Activated naive CD8-positive, alpha-beta T cell treated with anti-CD3 and anti-CD28 coated beads, Interleukin-2, amount 10 ng/mL, durations not matched to agents 7 days and 5 days (primary cell): ENCODE measurements at regions of chr15 and their contacts with region 1.

Region 1: GRCh38 chr15:74420197-74420898 is 13.4 kb downstream of the SEMA7A start:
- DNase-seq: no peak
- ATAC-seq: peak; percentile 38
- H3K4me3 Mint-ChIP-seq: no peak overlapping the region
- H3K27ac Mint-ChIP-seq: peak overlapping the region; percentile 79
- H3K4me1 Mint-ChIP-seq: peaks cover 32% of the 10 kb centered on the region
- H3K27me3 Mint-ChIP-seq: no peaks in the 10 kb centered on the region

Region 2: DNA sequence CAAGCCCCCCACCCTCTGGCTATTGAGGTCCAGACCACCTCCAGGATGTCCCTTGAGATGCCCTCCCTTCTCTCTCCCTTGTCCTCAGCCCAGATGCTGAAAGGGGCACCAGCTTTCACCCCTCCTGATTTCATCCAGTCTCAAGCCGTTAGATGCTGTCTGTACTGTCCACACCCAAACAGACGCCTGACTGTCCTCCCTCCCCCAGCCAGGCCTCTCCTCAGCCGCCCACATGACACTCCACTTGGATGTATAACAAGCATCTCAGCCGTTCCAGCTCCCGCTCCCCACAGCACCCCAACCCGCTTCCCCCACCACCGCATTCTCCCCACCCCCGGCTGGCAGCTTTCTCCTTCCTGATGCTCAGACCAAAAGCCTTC is 27.9 kb before region 1 on chr15:
- POLR2A ChIA-PET with region 1: no interaction called
- DNase-seq: no peak
- ATAC-seq: no peak
- H3K4me3 Mint-ChIP-seq: no peak overlapping the region
- H3K27ac Mint-ChIP-seq: peak overlapping the region; percentile 83
- H3K4me1 Mint-ChIP-seq: peaks cover 51% of the 10 kb centered on the region
- H3K27me3 Mint-ChIP-seq: no peaks in the 10 kb centered on the region

Region 3: GRCh38 chr15:74402873-74403587 is 17.3 kb before region 1 on chr15:
- POLR2A ChIA-PET with region 1: interaction called, 14 read pairs
- DNase-seq: peak; percentile 82
- ATAC-seq: peak; percentile 75
- H3K4me3 Mint-ChIP-seq: peak overlapping the region; percentile 42
- H3K27ac Mint-ChIP-seq: peak overlapping the region; percentile 87
- H3K4me1 Mint-ChIP-seq: peaks cover 66% of the 10 kb centered on the region
- H3K27me3 Mint-ChIP-seq: no peaks in the 10 kb centered on the region

Region 4: GRCh38 chr15:74433592-74434262 is 13.4 kb after region 1 on chr15 and contains the start of gene SEMA7A:
- POLR2A ChIA-PET with region 1: interaction called, 10 read pairs
- DNase-seq: peak; percentile 89
- ATAC-seq: peak; percentile 88
- H3K4me3 Mint-ChIP-seq: peak within 1 kb of the TSS; percentile 87
- H3K27ac Mint-ChIP-seq: peak within 1 kb of the TSS; percentile 89
- H3K4me1 Mint-ChIP-seq: peaks cover 60% of the 10 kb centered on the region
- H3K27me3 Mint-ChIP-seq: no peaks in the 10 kb centered on the region
- total RNA-seq, gene SEMA7A: 15.2 to 15.8 TPM

Region 5: DNA sequence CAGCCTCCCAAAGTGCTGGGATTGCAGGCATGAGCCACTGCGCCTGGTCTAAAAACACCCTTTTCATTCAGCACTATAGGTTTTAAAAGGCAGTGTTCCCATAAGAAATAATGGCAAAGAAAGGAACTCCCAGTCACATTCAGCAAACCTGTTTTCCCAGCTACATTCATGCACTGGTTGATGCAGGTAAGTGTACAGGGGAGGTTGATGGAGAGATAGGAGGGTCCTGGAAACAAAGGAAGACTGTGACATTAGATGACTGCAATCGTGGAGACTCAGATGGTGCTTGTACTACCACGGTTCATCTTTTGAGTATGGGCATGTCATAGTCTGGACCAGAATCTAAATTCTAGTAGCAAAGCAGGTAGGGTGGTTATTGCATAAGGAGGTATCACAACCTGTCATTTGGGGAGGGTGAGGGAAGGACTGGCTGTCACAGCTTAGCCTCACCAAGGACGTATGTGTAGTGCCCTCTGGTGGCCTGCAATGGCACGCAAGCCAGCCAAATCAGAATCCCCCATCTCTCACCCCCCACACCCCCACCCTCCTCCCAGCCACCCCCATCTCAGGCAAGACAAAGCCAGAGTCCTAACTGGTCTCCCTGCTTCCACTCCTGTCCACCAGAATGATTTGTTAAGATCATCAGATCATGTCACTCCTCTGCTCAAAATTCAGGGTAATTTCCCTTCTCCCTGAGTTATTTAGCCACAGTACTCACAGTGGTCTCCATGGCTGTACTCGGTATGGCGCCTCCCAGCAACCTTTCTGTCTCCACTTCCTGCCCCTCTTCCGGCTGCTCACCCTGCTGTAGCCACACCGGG is 69.4 kb after region 1 on chr15:
- POLR2A ChIA-PET with region 1: no interaction called
- DNase-seq: peak; percentile 77
- ATAC-seq: peak; percentile 96
- H3K4me3 Mint-ChIP-seq: peak overlapping the region; percentile 84
- H3K27ac Mint-ChIP-seq: peak overlapping the region; percentile 90
- H3K4me1 Mint-ChIP-seq: peaks cover 30% of the 10 kb centered on the region
- H3K27me3 Mint-ChIP-seq: no peaks in the 10 kb centered on the region

Region 6: GRCh38 chr15:74674119-74674518 is 253.8 kb after region 1 on chr15:
- POLR2A ChIA-PET with region 1: no interaction called
- DNase-seq: no peak
- ATAC-seq: no peak
- H3K4me3 Mint-ChIP-seq: no peak overlapping the region
- H3K27ac Mint-ChIP-seq: no peak overlapping the region
- H3K4me1 Mint-ChIP-seq: peaks cover 4% of the 10 kb centered on the region
- H3K27me3 Mint-ChIP-seq: no peaks in the 10 kb centered on the region